Heart left ventricle (tissue), 16 donors: ENCODE measurements at regions of chr2 and their contacts with region 1.

Region 1: DNA sequence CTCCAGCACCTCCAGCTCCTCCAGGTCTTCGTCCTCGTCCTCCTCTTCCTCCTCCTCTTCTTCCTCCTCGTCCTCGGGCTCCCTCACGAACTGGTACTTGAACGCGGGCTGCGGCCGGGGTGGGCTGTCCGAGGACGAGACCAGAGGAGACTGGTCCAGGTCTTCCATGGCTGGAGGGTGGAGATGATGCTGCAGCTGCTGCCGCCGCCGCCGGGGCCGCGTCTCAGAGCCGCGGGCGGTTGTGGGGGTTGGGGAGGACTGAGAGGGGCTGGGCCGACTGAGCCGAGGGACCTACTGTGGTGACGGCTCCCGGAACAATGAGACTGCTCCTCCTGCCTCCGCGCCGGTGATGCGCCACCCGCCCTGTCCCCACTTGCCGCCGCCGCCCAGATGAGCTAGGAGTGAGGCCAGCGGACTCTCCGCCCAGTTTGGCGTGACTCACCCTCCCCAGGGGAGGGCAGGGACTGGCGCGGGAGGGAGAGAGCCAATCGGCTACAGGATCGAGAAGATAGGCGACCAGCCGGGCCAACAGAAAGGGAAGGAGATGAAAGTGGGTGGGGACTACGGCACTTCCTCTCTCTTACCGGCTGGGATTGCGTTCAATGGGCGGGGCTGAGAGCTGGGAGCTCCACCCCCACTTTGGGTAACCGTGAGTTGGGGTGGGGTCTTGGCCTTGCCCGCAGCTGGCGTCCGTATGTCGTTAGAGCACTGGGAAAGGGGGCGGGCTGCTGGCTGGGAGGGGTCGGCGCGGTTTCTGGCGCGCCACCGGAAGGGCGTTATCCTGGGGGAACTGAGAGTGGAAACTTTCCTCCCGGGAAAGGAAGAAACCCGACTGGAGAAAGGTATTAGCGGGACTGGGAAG is at the start of gene RTN4:
- DNase-seq: peak; percentile 98 to 99 (median 99)
- ATAC-seq: peak; percentile 92 to 97 (median 94)
- H3K4me3 ChIP-seq: peak within 1 kb of the TSS; percentile 67 to 95 (median 88)
- H3K27ac ChIP-seq: peak within 1 kb of the TSS; percentile 91 to 100 (median 98)
- H3K4me1 ChIP-seq: peaks cover 0 to 51% (median 34%) of the 10 kb centered on the region in 12 donors
- H3K27me3 ChIP-seq: no peaks in the 10 kb centered on the region
- CTCF ChIP-seq: peak in 2 of 12 donors; percentile 5 to 10
- POLR2A ChIP-seq: peak; percentile 77 to 97
- total RNA-seq, gene RTN4: 46.1 to 250 (median 95.5) TPM

Region 2: GRCh38 chr2:54638103-54638502 is 412.3 kb before region 1 on chr2:
- intact Hi-C with region 1: no loop called
- DNase-seq: no peak
- ATAC-seq: no peak
- H3K4me3 ChIP-seq: no peak overlapping the region
- H3K27ac ChIP-seq: peak overlapping the region in 9 of 12 donors; percentile 5 to 94 (median 56)
- H3K4me1 ChIP-seq: peaks cover 27 to 99% (median 90%) of the 10 kb centered on the region in 12 donors
- H3K27me3 ChIP-seq: no peaks in the 10 kb centered on the region
- CTCF ChIP-seq: no peak
- POLR2A ChIP-seq: no peak

Region 3: DNA sequence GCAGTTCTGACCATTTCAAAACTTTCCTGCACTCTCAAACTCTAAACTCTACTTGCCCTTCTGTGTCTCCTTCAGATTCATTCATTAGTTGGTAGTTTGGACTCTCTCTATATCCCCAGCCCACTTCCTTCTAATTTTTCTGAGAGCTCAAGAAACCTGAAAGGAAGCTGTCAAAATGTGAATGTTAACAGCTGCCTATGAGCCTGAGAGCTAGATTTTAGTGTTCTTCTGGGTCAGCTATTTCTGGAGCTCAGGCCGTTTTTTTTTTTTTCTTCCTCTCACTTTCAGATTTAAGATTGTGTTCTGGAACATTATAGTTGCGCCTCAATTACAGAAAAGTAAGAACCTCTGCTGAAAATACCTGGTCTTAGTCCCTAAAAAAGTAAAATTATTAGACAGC is 73.2 kb before region 1 on chr2:
- intact Hi-C with region 1: loop called in 1 of 10 experiments (anchors 5 kb)
- DNase-seq: no peak
- ATAC-seq: peak in 3 of 4 donors; percentile 26 to 53 (median 42)
- H3K4me3 ChIP-seq: no peak overlapping the region
- H3K27ac ChIP-seq: peak overlapping the region in 5 of 12 donors; percentile 8 to 53 (median 35)
- H3K4me1 ChIP-seq: peaks cover 0 to 68% (median 47%) of the 10 kb centered on the region in 12 donors
- H3K27me3 ChIP-seq: no peaks in the 10 kb centered on the region
- CTCF ChIP-seq: no peak
- POLR2A ChIP-seq: no peak

Region 4: DNA sequence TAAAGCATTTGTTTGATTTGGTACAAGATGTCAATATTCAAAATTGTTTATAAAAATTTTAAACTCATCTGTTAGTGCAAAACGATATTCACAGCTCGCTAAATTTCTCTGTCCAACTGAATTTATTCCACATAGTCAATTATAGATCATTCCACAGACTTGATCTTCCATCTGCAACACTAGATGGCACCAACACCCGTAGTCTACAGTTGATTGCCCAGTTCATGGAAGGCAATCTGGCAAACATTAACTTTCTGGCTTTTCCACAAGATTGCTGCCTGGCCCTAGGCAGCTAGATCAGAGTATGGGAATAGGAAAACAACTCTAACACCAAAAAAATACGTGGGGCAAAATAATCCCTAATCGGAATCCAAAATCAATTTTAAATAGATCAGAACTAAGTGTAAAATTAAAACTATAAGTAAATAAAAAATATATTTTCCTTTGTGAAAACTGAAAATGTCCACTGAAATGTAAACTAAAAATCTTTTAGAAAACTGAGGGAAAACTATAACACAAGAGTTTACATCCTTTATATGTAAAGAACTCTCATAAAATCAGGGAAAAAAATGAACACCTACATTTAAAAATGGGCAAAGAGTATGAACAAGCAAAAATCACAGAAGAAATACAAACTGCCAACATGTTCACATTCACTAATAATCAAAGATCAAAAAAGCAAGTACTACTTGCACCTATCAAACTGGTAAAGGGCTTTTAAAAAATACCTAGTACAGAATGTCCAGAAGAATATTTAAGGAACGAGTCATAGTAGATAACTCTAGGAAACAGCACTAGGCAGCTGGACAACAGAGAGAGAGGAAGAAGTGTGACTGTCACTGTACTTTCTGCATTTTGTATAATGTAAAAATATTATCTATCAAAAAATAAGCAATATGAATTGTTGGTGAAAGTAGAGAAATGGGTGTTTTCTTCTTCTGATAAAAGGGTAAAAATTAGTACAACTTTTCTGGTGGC is 35.1 kb before region 1 on chr2:
- intact Hi-C with region 1: loop called in 5 of 10 experiments (anchors 5 kb)
- DNase-seq: peak in 3 of 5 donors; percentile 29 to 45 (median 40)
- ATAC-seq: peak; percentile 59 to 86 (median 81)
- H3K4me3 ChIP-seq: no peak overlapping the region
- H3K27ac ChIP-seq: no peak overlapping the region
- H3K4me1 ChIP-seq: peaks cover 0 to 86% (median 42%) of the 10 kb centered on the region in 12 donors
- H3K27me3 ChIP-seq: no peaks in the 10 kb centered on the region
- CTCF ChIP-seq: peak; percentile 44 to 77 (median 64)
- POLR2A ChIP-seq: no peak

Region 5: DNA sequence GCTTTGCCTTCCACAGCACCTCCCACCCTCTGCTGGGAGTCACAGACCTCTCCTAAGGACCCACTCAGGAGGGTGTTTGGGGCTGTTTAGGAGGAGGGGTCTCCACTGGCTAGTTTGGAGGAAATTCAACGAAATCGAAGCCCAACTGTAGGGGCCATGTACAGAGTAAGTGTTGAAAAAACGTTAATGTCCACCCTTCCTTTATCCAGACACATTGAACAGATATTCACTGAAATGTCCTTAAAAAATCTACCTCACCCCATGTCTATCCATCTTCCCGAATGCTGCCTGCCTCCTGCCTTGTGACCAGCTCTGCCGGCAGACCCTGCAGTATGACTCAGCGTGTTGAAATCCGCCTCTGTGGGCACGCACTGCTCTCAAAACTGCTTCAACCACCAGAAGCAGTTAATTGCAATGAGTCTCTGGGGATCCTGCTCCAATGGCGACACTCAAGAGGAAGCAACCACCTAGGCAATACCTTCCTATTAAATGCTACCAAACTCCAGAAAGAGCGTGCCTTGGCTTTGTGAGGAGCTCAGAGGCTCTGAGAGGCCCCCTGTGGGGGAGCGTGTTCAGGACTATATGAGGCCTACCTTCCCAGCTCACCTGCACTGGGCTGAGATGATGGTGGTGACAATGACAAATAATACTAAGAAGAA is 61.3 kb after region 1 on chr2:
- intact Hi-C with region 1: loop called in 5 of 10 experiments (anchors 5 to 10 kb)
- DNase-seq: peak; percentile 39 to 71 (median 62)
- ATAC-seq: peak in 3 of 4 donors; percentile 70 to 82 (median 73)
- H3K4me3 ChIP-seq: peak overlapping the region in 2 of 12 donors; percentile 2 to 19
- H3K27ac ChIP-seq: peak overlapping the region; percentile 47 to 95 (median 80)
- H3K4me1 ChIP-seq: peaks cover 0 to 44% (median 29%) of the 10 kb centered on the region in 12 donors
- H3K27me3 ChIP-seq: no peaks in the 10 kb centered on the region
- CTCF ChIP-seq: no peak
- POLR2A ChIP-seq: no peak